Natural killer cell (primary cell): ENCODE measurements at regions of chr16 and their contacts with region 1.

Region 1: GRCh38 chr16:56317998-56318826 is 107.1 kb downstream of the AMFR start:
- DNase-seq: peak; percentile 68 to 87
- ATAC-seq: peak; percentile 93 to 100 (median 100)
- H3K4me3 ChIP-seq: peak overlapping the region; percentile 9
- H3K4me3 Mint-ChIP-seq: peak overlapping the region; percentile 37
- H3K27ac ChIP-seq: no peak overlapping the region
- H3K27ac Mint-ChIP-seq: no peak overlapping the region
- H3K4me1 ChIP-seq: peaks cover 7% of the 10 kb centered on the region
- H3K4me1 Mint-ChIP-seq: peaks cover 0 to 14% of the 10 kb centered on the region in 2 donors
- H3K27me3 ChIP-seq: no peaks in the 10 kb centered on the region
- H3K27me3 Mint-ChIP-seq: peaks cover 0 to 5% of the 10 kb centered on the region in 2 donors
- CTCF ChIP-seq: peak; percentile 88

Region 2: GRCh38 chr16:55711959-55712876 is 606.0 kb before region 1 on chr16:
- intact Hi-C with region 1: loop called (anchors 1 kb)
- DNase-seq: peak; percentile 40 to 75
- ATAC-seq: peak; percentile 31 to 73 (median 68)
- H3K4me3 ChIP-seq: no peak overlapping the region
- H3K4me3 Mint-ChIP-seq: no peak overlapping the region
- H3K27ac ChIP-seq: no peak overlapping the region
- H3K27ac Mint-ChIP-seq: no peak overlapping the region
- H3K4me1 ChIP-seq: no peaks in the 10 kb centered on the region
- H3K4me1 Mint-ChIP-seq: no peaks in the 10 kb centered on the region
- H3K27me3 ChIP-seq: no peaks in the 10 kb centered on the region
- H3K27me3 Mint-ChIP-seq: peaks cover 7% of the 10 kb centered on the region in 2 donors
- CTCF ChIP-seq: peak; percentile 81

Region 3: GRCh38 chr16:55944377-55944802 is 373.8 kb before region 1 on chr16:
- intact Hi-C with region 1: loop called (anchors 1 kb)
- DNase-seq: peak; percentile 21 to 70
- ATAC-seq: peak in 1 of 3 donors; percentile 67
- H3K4me3 ChIP-seq: no peak overlapping the region
- H3K4me3 Mint-ChIP-seq: no peak overlapping the region
- H3K27ac ChIP-seq: no peak overlapping the region
- H3K27ac Mint-ChIP-seq: no peak overlapping the region
- H3K4me1 ChIP-seq: no peaks in the 10 kb centered on the region
- H3K4me1 Mint-ChIP-seq: no peaks in the 10 kb centered on the region
- H3K27me3 ChIP-seq: no peaks in the 10 kb centered on the region
- H3K27me3 Mint-ChIP-seq: peaks cover 21 to 66% of the 10 kb centered on the region in 2 donors
- CTCF ChIP-seq: peak; percentile 83

Region 4: GRCh38 chr16:56041686-56042085 is 276.5 kb before region 1 on chr16:
- intact Hi-C with region 1: loop called (anchors 1 kb)
- DNase-seq: peak in 1 of 2 donors; percentile 62
- ATAC-seq: peak in 1 of 3 donors; percentile 45
- H3K4me3 ChIP-seq: no peak overlapping the region
- H3K4me3 Mint-ChIP-seq: no peak overlapping the region
- H3K27ac ChIP-seq: no peak overlapping the region
- H3K27ac Mint-ChIP-seq: no peak overlapping the region
- H3K4me1 ChIP-seq: no peaks in the 10 kb centered on the region
- H3K4me1 Mint-ChIP-seq: no peaks in the 10 kb centered on the region
- H3K27me3 ChIP-seq: no peaks in the 10 kb centered on the region
- H3K27me3 Mint-ChIP-seq: peaks cover 3 to 23% of the 10 kb centered on the region in 2 donors
- CTCF ChIP-seq: no peak